PC-3 (cell line): ENCODE measurements at regions of chr11 and their contacts with region 1.

Region 1: GRCh38 chr11:62889484-62890437 is 9.1 kb downstream of the SLC3A2 start:
- DNase-seq: peak; percentile 42
- ATAC-seq: peak; percentile 53
- H3K4me3 ChIP-seq: no peak overlapping the region
- H3K27ac ChIP-seq: no peak overlapping the region
- H3K4me1 ChIP-seq: peaks cover 5% of the 10 kb centered on the region; the same call in 1 of the 2 replicates
- H3K27me3 ChIP-seq: no peaks in the 10 kb centered on the region
- CTCF ChIP-seq: no peak

Region 2: GRCh38 chr11:62514151-62514550 is 375.6 kb before region 1 on chr11:
- CTCF ChIA-PET with region 1: no interaction called
- POLR2A ChIA-PET with region 1: interaction called, 47 read pairs
- intact Hi-C with region 1: no loop called
- DNase-seq: no peak
- ATAC-seq: no peak; the same call in 1 of the 2 replicates
- H3K4me3 ChIP-seq: no peak overlapping the region
- H3K27ac ChIP-seq: no peak overlapping the region
- H3K4me1 ChIP-seq: peaks cover 12% of the 10 kb centered on the region
- H3K27me3 ChIP-seq: no peaks in the 10 kb centered on the region
- CTCF ChIP-seq: no peak

Region 3: DNA sequence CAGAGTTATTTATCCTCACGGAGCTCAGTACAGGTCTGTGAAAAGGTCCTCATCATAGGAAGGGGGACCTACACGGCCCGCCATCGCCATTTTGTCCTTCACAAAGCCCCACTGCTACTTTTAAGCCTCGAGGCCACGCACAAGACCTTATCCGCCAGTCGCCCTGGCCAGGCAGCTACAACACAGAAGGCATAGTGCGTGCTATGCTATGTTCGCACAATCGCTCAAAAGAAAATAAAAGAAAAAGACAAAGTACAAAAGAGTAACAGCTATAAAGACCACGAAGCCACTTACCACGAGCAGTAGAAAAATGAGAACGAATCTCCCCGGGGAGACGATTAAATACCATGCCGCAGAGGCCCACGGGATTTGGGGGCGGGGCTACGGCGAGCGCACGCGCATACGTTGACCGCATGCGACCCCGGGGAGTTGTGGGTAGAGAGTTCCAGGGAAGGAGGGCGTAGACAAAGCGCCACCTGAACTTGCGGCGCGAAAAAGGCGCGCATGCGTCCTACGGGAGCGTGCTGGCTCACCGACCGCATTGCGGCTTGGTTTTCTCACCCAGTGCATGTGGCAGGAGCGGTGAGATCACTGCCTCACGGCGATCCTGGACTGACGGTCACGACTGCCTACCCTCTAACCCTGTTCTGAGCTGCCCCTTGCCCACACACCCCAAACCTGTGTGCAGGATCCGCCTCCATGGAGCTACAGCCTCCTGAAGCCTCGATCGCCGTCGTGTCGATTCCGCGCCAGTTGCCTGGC is 34.0 kb before region 1 on chr11:
- CTCF ChIA-PET with region 1: no interaction called
- POLR2A ChIA-PET with region 1: no interaction called
- intact Hi-C with region 1: no loop called
- DNase-seq: peak; percentile 100
- ATAC-seq: peak; percentile 83
- H3K4me3 ChIP-seq: peak overlapping the region; percentile 93
- H3K27ac ChIP-seq: peak overlapping the region; percentile 78
- H3K4me1 ChIP-seq: peaks cover 31% of the 10 kb centered on the region
- H3K27me3 ChIP-seq: no peaks in the 10 kb centered on the region
- CTCF ChIP-seq: no peak

Region 4: DNA sequence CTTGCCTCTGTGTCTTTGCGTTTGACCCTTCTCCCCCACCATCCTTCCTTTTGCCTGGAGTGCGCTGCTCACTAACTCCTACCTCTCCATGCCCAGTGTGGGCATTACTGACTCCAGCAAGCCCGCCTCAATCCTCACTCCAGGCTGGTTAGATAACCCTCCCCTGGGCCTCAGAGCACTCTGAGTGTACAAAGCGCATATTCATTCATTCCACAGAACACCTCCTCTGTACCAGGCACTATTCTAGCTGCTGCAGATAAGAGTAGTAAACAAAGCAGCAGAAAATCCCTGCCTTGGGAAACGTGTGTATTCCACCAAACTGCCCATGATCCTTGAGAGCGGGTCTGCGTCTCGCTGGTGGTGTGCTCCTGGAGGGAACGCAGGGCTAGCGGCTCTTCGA is 122.7 kb after region 1 on chr11:
- CTCF ChIA-PET with region 1: no interaction called
- POLR2A ChIA-PET with region 1: no interaction called
- intact Hi-C with region 1: no loop called
- DNase-seq: no peak
- ATAC-seq: no peak
- H3K4me3 ChIP-seq: no peak overlapping the region
- H3K27ac ChIP-seq: no peak overlapping the region
- H3K4me1 ChIP-seq: no peaks in the 10 kb centered on the region
- H3K27me3 ChIP-seq: peaks cover 64% of the 10 kb centered on the region
- CTCF ChIP-seq: no peak

Region 5: GRCh38 chr11:63551091-63551888 is 661.5 kb after region 1 on chr11:
- CTCF ChIA-PET with region 1: no interaction called
- POLR2A ChIA-PET with region 1: interaction called, 13 read pairs
- intact Hi-C with region 1: no loop called
- DNase-seq: no peak
- ATAC-seq: no peak
- H3K4me3 ChIP-seq: no peak overlapping the region
- H3K27ac ChIP-seq: no peak overlapping the region
- H3K4me1 ChIP-seq: peaks cover 17% of the 10 kb centered on the region
- H3K27me3 ChIP-seq: no peaks in the 10 kb centered on the region
- CTCF ChIP-seq: no peak